ENCODE measurements at regions of chr3 and their contacts with region 1.

Region 1: DNA sequence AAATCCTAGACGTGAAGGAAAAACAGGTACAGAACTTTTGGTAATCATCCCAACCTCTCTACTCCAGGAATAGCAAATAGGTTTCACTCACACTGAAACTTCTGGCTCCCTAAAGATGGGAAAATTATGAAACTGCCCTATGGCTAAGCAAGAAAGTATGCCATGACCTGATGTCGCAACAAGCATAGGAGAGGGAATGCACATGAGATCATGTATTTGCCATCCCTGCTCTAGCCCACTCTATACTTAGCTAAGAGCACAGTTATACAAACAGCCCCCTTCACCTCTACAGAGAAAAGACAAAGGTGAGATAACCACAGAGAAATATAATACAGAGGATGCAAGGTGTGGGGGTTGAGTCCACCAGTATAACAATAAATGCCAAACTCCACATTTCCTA is 102.7 kb downstream of the TBC1D5 start:
- DNase-seq: no peak
- H3K4me3 Mint-ChIP-seq: no peak overlapping the region
- H3K27ac Mint-ChIP-seq: no peak overlapping the region
- H3K4me1 Mint-ChIP-seq: peaks cover 25% of the 10 kb centered on the region
- H3K27me3 Mint-ChIP-seq: no peaks in the 10 kb centered on the region

Region 2: GRCh38 chr3:17227472-17227871 is 412.3 kb before region 1 on chr3:
- CTCF ChIA-PET with region 1: no interaction called
- intact Hi-C with region 1: no loop called
- DNase-seq: no peak
- H3K4me3 Mint-ChIP-seq: no peak overlapping the region
- H3K27ac Mint-ChIP-seq: no peak overlapping the region
- H3K4me1 Mint-ChIP-seq: no peaks in the 10 kb centered on the region
- H3K27me3 Mint-ChIP-seq: no peaks in the 10 kb centered on the region

Region 3: GRCh38 chr3:17579289-17580031 is 60.3 kb before region 1 on chr3:
- CTCF ChIA-PET with region 1: no interaction called
- intact Hi-C with region 1: loop called (anchors 2 kb)
- DNase-seq: no peak
- H3K4me3 Mint-ChIP-seq: no peak overlapping the region
- H3K27ac Mint-ChIP-seq: no peak overlapping the region
- H3K4me1 Mint-ChIP-seq: peaks cover 4% of the 10 kb centered on the region
- H3K27me3 Mint-ChIP-seq: no peaks in the 10 kb centered on the region

Region 4: DNA sequence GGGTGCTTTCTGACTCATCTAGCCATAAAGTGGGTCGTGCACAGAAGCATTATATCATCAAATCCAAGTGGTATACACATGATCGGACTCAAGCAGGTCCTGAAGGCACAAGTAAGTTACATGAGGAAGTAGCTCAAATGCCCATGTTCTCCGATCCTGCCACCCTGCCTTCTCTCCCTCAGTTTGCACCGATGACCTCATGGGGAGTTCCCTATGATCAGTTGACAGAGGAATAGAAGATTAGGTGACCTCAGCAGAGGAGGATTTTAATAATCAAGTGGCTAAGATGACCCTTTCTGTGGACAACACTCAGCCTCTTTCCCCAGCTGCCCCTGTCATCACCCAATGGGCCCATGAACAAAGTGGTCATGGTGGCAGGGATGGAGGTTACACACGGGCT is 46.8 kb before region 1 on chr3:
- CTCF ChIA-PET with region 1: no interaction called
- intact Hi-C with region 1: no loop called
- DNase-seq: no peak
- H3K4me3 Mint-ChIP-seq: no peak overlapping the region
- H3K27ac Mint-ChIP-seq: no peak overlapping the region
- H3K4me1 Mint-ChIP-seq: peaks cover 2% of the 10 kb centered on the region
- H3K27me3 Mint-ChIP-seq: no peaks in the 10 kb centered on the region

Region 5: GRCh38 chr3:17678116-17678741 is 38.5 kb after region 1 on chr3:
- CTCF ChIA-PET with region 1: no interaction called
- intact Hi-C with region 1: loop called (anchors 2 kb)
- DNase-seq: peak; percentile 22
- H3K4me3 Mint-ChIP-seq: no peak overlapping the region
- H3K27ac Mint-ChIP-seq: no peak overlapping the region
- H3K4me1 Mint-ChIP-seq: peaks cover 9% of the 10 kb centered on the region
- H3K27me3 Mint-ChIP-seq: no peaks in the 10 kb centered on the region